Activated CD4-positive, alpha-beta T cell treated with anti-CD3 and anti-CD28 coated beads for 36 hours (primary cell): ENCODE measurements at regions of chr2 and their contacts with region 1.

Region 1: GRCh38 chr2:131154071-131154531 is 49.0 kb downstream of the PLEKHB2 start:
- DNase-seq: peak; percentile 93
- ATAC-seq: peak; percentile 99
- H3K4me3 Mint-ChIP-seq: no peak overlapping the region
- H3K27ac Mint-ChIP-seq: peak overlapping the region; percentile 1
- H3K4me1 Mint-ChIP-seq: peaks cover 31% of the 10 kb centered on the region
- H3K27me3 Mint-ChIP-seq: no peaks in the 10 kb centered on the region

Region 2: DNA sequence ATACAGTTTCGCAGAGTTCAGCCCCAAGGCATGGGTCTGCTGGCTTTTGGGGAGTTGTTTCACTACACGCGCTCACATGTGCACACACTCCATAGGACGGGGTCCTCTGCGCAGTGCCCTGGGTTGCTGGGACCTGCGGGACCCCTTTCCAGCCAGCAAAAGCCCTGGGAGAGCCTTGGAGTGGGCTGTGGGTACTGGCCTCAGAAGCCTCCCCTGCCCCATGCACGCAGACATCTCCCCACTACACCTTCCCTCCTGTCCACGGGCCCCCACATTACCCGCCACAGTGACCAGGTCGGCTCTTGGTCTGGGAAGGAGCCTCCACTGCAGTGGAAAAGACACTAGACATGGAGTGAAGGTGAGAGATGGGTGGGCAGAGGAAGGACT is 109.4 kb before region 1 on chr2:
- CTCF ChIA-PET with region 1: no interaction called
- POLR2A ChIA-PET with region 1: no interaction called
- intact Hi-C with region 1: no loop called
- DNase-seq: no peak
- ATAC-seq: no peak
- H3K4me3 Mint-ChIP-seq: no peak overlapping the region
- H3K27ac Mint-ChIP-seq: no peak overlapping the region
- H3K4me1 Mint-ChIP-seq: peaks cover 24% of the 10 kb centered on the region
- H3K27me3 Mint-ChIP-seq: no peaks in the 10 kb centered on the region

Region 3: GRCh38 chr2:131055169-131056065 is 98.7 kb before region 1 on chr2:
- CTCF ChIA-PET with region 1: no interaction called
- POLR2A ChIA-PET with region 1: no interaction called
- intact Hi-C with region 1: no loop called
- DNase-seq: no peak
- ATAC-seq: no peak
- H3K4me3 Mint-ChIP-seq: no peak overlapping the region
- H3K27ac Mint-ChIP-seq: no peak overlapping the region
- H3K4me1 Mint-ChIP-seq: peaks cover 4% of the 10 kb centered on the region
- H3K27me3 Mint-ChIP-seq: no peaks in the 10 kb centered on the region

Region 4: GRCh38 chr2:131105156-131105949 is 48.7 kb before region 1 on chr2 and contains the start of gene PLEKHB2:
- CTCF ChIA-PET with region 1: no interaction called
- POLR2A ChIA-PET with region 1: no interaction called
- intact Hi-C with region 1: loop called in 1 of 2 experiments (anchors 1 kb)
- DNase-seq: peak; percentile 94
- ATAC-seq: peak; percentile 66
- H3K4me3 Mint-ChIP-seq: peak within 1 kb of the TSS; percentile 98
- H3K27ac Mint-ChIP-seq: peak within 1 kb of the TSS; percentile 99
- H3K4me1 Mint-ChIP-seq: peaks cover 43% of the 10 kb centered on the region
- H3K27me3 Mint-ChIP-seq: no peaks in the 10 kb centered on the region
- total RNA-seq, gene PLEKHB2: 39.9 to 42.4 TPM

Region 5: GRCh38 chr2:131115752-131116151 is 38.3 kb before region 1 on chr2:
- CTCF ChIA-PET with region 1: no interaction called
- POLR2A ChIA-PET with region 1: no interaction called
- intact Hi-C with region 1: no loop called
- DNase-seq: no peak
- ATAC-seq: peak; percentile 49
- H3K4me3 Mint-ChIP-seq: no peak overlapping the region
- H3K27ac Mint-ChIP-seq: peak overlapping the region; percentile 26
- H3K4me1 Mint-ChIP-seq: peaks cover 64% of the 10 kb centered on the region
- H3K27me3 Mint-ChIP-seq: no peaks in the 10 kb centered on the region

Region 6: GRCh38 chr2:131673392-131674173 is 519.5 kb after region 1 on chr2:
- CTCF ChIA-PET with region 1: interaction called, 9 read pairs
- POLR2A ChIA-PET with region 1: no interaction called
- intact Hi-C with region 1: loop called (anchors 1 kb)
- DNase-seq: peak; percentile 78
- ATAC-seq: peak; percentile 74
- H3K4me3 Mint-ChIP-seq: peak overlapping the region; percentile 19
- H3K27ac Mint-ChIP-seq: no peak overlapping the region
- H3K4me1 Mint-ChIP-seq: peaks cover 2% of the 10 kb centered on the region
- H3K27me3 Mint-ChIP-seq: peaks cover 24% of the 10 kb centered on the region

Region 7: DNA sequence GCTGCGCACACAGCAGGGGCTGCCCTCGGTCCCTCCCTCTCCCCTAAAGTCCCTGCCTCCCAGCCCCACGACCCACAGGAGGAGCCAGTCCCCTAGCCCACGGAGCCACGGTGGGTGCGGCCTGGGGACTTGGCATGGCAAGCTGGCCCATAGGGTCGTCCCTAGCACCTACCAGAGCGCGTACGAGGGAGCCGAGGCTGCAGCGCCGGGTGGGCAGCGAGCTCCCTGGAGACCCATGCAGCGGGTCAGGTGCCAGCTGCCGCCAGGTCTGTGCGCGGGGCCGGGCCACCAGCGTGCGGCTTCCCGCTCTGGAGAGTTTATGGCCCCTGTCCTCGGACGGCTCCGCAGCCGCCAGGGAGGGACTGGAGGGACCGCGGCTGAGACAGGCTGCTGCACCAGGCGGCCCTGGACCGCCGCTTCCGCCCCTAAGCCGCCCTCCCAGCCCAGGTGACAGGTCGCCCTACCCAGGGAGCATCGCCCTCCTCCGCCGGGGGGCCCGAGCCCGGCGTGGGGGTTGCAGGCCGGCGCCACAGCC is 647.2 kb after region 1 on chr2:
- CTCF ChIA-PET with region 1: no interaction called
- POLR2A ChIA-PET with region 1: no interaction called
- intact Hi-C with region 1: loop called (anchors 1 kb)
- DNase-seq: no peak
- ATAC-seq: no peak
- H3K4me3 Mint-ChIP-seq: no peak overlapping the region
- H3K27ac Mint-ChIP-seq: no peak overlapping the region
- H3K4me1 Mint-ChIP-seq: no peaks in the 10 kb centered on the region
- H3K27me3 Mint-ChIP-seq: peaks cover 8% of the 10 kb centered on the region